Endothelial cell of umbilical vein (primary cell): ENCODE measurements at regions of chr4 and their contacts with region 1.

Region 1: GRCh38 chr4:139099366-139099982 is 77.5 kb downstream of the ELF2 start:
- DNase-seq: peak; percentile 79
- H3K4me3 ChIP-seq: no peak overlapping the region
- H3K27ac ChIP-seq: no peak overlapping the region
- H3K4me1 ChIP-seq: no peaks in the 10 kb centered on the region
- H3K27me3 ChIP-seq: no peaks in the 10 kb centered on the region
- CTCF ChIP-seq: peak; percentile 76 to 77
- POLR2A ChIP-seq: no peak

Region 2: GRCh38 chr4:138555584-138555983 is 543.9 kb before region 1 on chr4:
- CTCF ChIA-PET with region 1: no interaction called
- POLR2A ChIA-PET with region 1: no interaction called
- dilution Hi-C with region 1: no loop called
- intact Hi-C with region 1: no loop called
- DNase-seq: no peak
- H3K4me3 ChIP-seq: no peak overlapping the region
- H3K27ac ChIP-seq: no peak overlapping the region
- H3K4me1 ChIP-seq: no peaks in the 10 kb centered on the region
- H3K27me3 ChIP-seq: no peaks in the 10 kb centered on the region
- CTCF ChIP-seq: peak; percentile 20 to 23
- POLR2A ChIP-seq: no peak

Region 3: DNA sequence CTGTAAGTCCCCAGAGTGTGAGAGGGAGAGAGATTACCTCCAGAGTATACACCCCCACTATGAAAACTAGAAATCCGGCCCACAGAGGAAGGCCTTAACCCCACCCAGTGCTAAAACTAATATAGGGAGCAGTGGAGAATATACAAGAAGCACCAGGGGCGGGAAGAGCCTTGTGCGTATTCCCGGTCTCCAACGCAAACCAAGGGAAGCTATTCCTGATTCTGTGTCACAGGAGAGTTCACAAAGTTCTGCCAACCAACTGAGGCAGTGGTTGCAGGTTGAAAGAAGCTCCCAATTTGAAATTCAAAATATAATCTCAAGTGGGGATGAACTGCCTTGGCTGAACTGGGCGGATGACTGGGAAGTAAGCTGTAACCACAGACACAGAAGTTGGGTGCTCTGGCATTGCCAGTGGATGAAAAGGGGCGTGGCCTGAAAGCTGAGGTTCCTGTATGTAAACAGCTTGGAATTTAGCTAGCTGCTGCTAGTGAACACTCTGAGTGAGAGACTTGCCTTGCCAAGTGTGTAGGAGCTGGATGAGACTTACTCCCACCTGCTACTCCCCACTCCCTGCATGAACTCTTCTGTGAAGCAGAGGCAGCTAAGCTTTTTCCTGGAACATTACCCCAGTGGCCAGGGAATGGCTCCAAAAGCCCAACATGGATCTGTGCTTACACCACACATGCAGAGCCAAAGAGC is 44.8 kb after region 1 on chr4:
- CTCF ChIA-PET with region 1: interaction called, 4 read pairs
- POLR2A ChIA-PET with region 1: no interaction called
- dilution Hi-C with region 1: no loop called
- intact Hi-C with region 1: loop called (anchors 1 kb)
- DNase-seq: no peak
- H3K4me3 ChIP-seq: no peak overlapping the region
- H3K27ac ChIP-seq: no peak overlapping the region
- H3K4me1 ChIP-seq: no peaks in the 10 kb centered on the region
- H3K27me3 ChIP-seq: no peaks in the 10 kb centered on the region
- CTCF ChIP-seq: no peak
- POLR2A ChIP-seq: no peak

Region 4: GRCh38 chr4:139177868-139178611 is 78.6 kb after region 1 on chr4:
- CTCF ChIA-PET with region 1: interaction called, 13 read pairs
- POLR2A ChIA-PET with region 1: no interaction called
- dilution Hi-C with region 1: no loop called
- intact Hi-C with region 1: loop called (anchors 2 kb)
- DNase-seq: peak; percentile 96
- H3K4me3 ChIP-seq: peak overlapping the region; percentile 83 to 93 (median 84)
- H3K27ac ChIP-seq: peak overlapping the region; percentile 75
- H3K4me1 ChIP-seq: peaks cover 7% of the 10 kb centered on the region
- H3K27me3 ChIP-seq: no peaks in the 10 kb centered on the region
- CTCF ChIP-seq: no peak
- POLR2A ChIP-seq: peak; percentile 75

Region 5: GRCh38 chr4:139256349-139256748 is 156.9 kb after region 1 on chr4:
- CTCF ChIA-PET with region 1: no interaction called
- POLR2A ChIA-PET with region 1: no interaction called
- dilution Hi-C with region 1: no loop called
- intact Hi-C with region 1: no loop called
- DNase-seq: no peak
- H3K4me3 ChIP-seq: no peak overlapping the region
- H3K27ac ChIP-seq: no peak overlapping the region
- H3K4me1 ChIP-seq: no peaks in the 10 kb centered on the region
- H3K27me3 ChIP-seq: no peaks in the 10 kb centered on the region
- CTCF ChIP-seq: no peak
- POLR2A ChIP-seq: no peak

Region 6: DNA sequence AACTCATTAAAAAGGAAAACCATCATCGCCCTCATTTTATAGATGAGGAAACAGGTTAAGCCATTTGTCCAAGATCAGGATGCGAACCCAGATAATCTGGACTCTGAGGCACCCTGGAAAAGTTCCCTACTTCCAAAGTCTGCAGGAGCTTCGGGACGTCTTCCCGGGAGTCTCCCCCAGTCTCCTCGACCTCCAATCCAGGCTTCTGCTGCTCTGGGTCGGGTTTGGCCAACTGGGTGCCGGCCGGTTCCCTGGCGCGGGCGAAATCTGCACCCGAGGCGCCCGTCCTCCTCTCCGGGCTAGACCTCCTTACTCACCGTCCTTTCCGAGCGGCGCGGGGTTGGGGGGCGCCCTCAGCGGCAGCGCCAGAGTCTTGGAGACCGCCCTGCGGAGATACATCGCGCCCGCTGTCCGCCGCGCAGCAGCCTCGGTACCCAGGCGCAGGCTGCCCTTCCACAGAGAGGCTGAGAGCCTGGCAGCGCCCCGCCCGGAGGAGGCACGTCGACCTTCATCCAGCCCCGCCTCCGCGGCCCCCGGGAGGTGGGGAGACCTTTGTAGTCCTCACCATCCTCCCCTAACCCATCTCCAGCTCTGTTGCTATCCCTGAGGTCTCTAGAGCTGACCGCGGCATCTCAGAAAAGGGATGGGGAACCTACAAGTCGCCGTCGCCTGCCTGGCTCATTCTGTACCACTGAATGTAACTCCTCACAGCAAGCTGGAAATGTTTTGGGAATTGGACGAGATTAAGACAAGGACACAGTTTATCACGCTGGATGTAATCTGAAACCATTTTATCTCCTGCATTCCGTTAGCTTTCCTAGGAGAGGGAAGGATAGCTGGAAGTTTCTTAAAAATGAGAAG is 180.5 kb after region 1 on chr4 and contains the start of gene MGARP:
- CTCF ChIA-PET with region 1: interaction called, 9 read pairs
- POLR2A ChIA-PET with region 1: no interaction called
- dilution Hi-C with region 1: no loop called
- intact Hi-C with region 1: loop called (anchors 5 kb)
- DNase-seq: peak; percentile 73
- H3K4me3 ChIP-seq: peak within 1 kb of the TSS; percentile 59 to 80 (median 68)
- H3K27ac ChIP-seq: no peak within 1 kb of the TSS
- H3K4me1 ChIP-seq: peaks cover 26% of the 10 kb centered on the region
- H3K27me3 ChIP-seq: no peaks in the 10 kb centered on the region
- CTCF ChIP-seq: peak in 1 of 2 donors; percentile 2
- POLR2A ChIP-seq: peak; percentile 53
- total RNA-seq, gene MGARP: 16.2 and 25.9 TPM in 2 replicates

Region 7: DNA sequence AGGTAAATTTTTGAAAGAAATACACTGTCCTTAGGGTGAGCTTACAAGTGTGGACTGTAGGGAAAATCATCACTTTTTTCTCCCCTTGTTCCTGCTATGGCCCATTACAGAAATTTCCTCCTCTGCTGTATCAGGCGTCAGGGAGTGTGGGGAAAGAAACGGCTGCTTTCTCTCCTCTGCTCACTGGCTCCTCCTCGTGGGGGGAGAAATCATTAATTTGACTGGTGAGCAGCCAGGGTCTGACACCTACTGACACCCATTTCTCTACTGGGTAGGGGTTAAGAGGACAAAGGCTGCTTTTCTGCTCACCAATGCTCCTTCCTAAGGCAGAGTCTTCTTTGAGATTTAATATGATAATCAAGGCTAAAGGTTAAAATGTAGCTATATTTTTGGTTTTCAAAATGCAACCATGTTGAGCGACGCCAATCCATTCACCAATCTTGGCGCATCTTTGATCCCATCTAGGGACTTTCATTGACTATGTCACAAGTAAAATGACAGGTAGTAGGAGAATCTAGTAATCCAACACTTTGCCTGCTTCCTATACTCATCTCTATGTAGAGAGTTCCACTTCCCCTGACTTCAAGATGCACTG is 431.5 kb after region 1 on chr4:
- CTCF ChIA-PET with region 1: no interaction called
- POLR2A ChIA-PET with region 1: no interaction called
- dilution Hi-C with region 1: no loop called
- intact Hi-C with region 1: loop called (anchors 1 kb)
- DNase-seq: peak; percentile 50
- H3K4me3 ChIP-seq: no peak overlapping the region
- H3K27ac ChIP-seq: no peak overlapping the region
- H3K4me1 ChIP-seq: no peaks in the 10 kb centered on the region
- H3K27me3 ChIP-seq: no peaks in the 10 kb centered on the region
- CTCF ChIP-seq: peak; percentile 68
- POLR2A ChIP-seq: no peak